ENCODE measurements at regions of chr2 and their contacts with region 1.

Region 1: GRCh38 chr2:118855451-118856279 is 8.2 kb upstream of the EN1 start:
- DNase-seq: peak; percentile 21
- H3K4me3 ChIP-seq: 0 out of 2 replicates have a peak overlapping the region, but pooled peaks have one; percentile 20
- H3K27ac ChIP-seq: no peak overlapping the region
- H3K27me3 ChIP-seq: peaks cover 95% of the 10 kb centered on the region
- CTCF ChIP-seq: peak; percentile 95

Region 2: GRCh38 chr2:118221666-118222594 is 633.7 kb before region 1 on chr2:
- CTCF ChIA-PET with region 1: interaction called, 61 read pairs
- POLR2A ChIA-PET with region 1: no interaction called
- DNase-seq: peak; percentile 36
- H3K4me3 ChIP-seq: no peak overlapping the region
- H3K27ac ChIP-seq: no peak overlapping the region
- H3K27me3 ChIP-seq: peaks cover 44% of the 10 kb centered on the region
- CTCF ChIP-seq: peak; percentile 75

Region 3: DNA sequence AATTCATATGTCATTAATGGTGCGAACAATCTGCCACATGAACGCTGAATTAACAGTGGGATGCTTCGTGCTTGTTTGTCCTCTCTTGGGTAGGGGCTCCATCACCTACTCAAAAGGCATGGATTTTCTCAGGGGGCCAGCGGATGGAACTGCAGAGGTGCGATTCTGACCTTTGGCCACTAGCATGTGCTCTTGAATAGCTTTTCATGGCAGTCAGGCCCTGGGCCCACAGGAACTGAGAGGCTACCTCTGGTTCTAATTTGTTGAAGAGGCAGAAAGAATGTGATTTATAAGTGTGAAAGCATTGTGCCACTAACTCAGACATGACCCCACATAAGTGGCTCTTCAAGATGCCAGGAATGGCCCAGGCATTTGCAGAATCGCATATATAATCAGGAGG is 484.1 kb before region 1 on chr2:
- CTCF ChIA-PET with region 1: interaction called, 26 read pairs
- POLR2A ChIA-PET with region 1: no interaction called
- DNase-seq: peak; percentile 13
- H3K4me3 ChIP-seq: no peak overlapping the region
- H3K27ac ChIP-seq: no peak overlapping the region
- H3K27me3 ChIP-seq: no peaks in the 10 kb centered on the region
- CTCF ChIP-seq: peak; percentile 76

Region 4: GRCh38 chr2:118492335-118492734 is 363.3 kb before region 1 on chr2:
- CTCF ChIA-PET with region 1: interaction called, 20 read pairs
- POLR2A ChIA-PET with region 1: no interaction called
- DNase-seq: no peak
- H3K4me3 ChIP-seq: no peak overlapping the region
- H3K27ac ChIP-seq: no peak overlapping the region
- H3K27me3 ChIP-seq: no peaks in the 10 kb centered on the region
- CTCF ChIP-seq: peak; percentile 52

Region 5: GRCh38 chr2:118539290-118539689 is 316.4 kb before region 1 on chr2:
- CTCF ChIA-PET with region 1: interaction called, 23 read pairs
- POLR2A ChIA-PET with region 1: no interaction called
- DNase-seq: no peak
- H3K4me3 ChIP-seq: no peak overlapping the region
- H3K27ac ChIP-seq: no peak overlapping the region
- H3K27me3 ChIP-seq: no peaks in the 10 kb centered on the region
- CTCF ChIP-seq: peak; percentile 57

Region 6: DNA sequence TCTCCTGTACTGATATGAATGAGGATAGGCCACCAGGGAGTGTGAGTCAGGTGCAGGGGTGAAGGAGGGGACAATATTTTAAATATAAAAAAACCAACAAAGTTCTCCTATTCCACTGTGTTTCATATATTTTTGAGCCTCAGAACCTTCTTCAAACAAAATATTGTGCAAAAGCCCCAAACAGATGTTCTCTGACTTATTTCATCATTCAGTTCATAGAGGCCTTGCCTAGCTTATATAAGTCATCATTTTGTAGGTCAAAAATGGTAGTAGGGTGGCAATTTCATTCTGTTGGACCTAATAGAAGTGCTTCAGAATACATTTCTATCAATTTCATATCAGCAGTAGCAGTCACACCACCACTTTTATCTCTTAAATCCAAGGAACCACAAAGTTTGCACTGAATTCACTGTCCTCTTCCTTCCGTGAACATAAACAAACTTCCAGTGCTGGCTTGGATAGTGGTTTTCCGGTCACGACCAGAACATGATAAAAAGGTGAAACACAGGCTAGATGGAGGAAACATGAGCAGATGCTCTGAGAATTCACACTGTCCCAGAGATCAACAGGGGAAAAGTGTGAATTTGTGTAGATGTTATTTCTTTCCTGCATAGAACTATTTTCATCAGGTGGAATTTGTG is 107.3 kb before region 1 on chr2:
- CTCF ChIA-PET with region 1: no interaction called
- POLR2A ChIA-PET with region 1: no interaction called
- DNase-seq: no peak
- H3K4me3 ChIP-seq: no peak overlapping the region
- H3K27ac ChIP-seq: no peak overlapping the region
- H3K27me3 ChIP-seq: peaks cover 7% of the 10 kb centered on the region
- CTCF ChIP-seq: no peak

Region 7: DNA sequence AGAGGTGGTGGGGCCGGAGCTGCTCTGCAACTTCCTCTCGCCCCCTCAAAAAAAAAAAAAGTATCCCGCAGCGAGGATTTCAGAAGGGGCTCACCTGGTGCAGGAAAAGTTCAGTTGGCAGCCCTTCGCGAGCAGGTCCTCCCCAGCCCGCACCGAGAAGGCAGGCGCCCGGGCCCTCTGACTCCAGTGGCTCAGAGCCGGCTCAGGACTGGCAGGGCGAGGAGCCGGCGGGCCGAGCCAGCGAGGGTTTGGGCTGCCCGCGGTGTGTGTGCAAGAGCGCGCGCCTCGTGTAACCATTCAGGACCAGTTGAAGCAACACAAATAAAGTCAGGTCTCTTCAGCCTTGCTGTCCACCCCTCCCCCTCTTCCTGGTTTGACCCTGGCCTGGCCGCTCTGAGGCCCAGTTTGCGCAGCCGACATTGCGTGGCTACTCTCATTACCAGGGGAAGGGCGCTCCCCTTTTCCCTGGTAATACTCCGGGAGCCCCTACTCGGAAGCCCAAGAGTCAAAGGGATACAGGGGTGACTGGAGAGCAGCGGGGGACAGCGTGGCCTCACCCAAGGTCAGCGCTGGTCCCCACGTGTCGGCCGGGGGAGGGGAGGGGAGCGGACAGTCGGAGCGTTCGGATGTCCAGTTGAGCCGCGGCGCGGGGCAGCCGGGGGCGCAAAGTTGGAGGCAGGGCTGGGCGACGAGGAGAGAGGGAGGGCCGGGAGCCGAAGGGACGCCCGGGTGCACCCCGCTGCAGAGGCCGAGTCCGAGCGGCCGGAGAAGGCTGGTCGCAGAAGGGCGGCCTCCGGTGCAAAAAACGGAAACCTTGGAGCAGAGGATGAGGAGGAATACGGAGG is 20.5 kb before region 1 on chr2:
- CTCF ChIA-PET with region 1: no interaction called
- POLR2A ChIA-PET with region 1: no interaction called
- DNase-seq: no peak
- H3K4me3 ChIP-seq: peak overlapping the region; percentile 27; the same call in 1 of the 2 replicates
- H3K27ac ChIP-seq: no peak overlapping the region
- H3K27me3 ChIP-seq: peaks cover 89% of the 10 kb centered on the region
- CTCF ChIP-seq: no peak